Caco-2 (cell line): ENCODE measurements at regions of chr16 and their contacts with region 1.

Region 1: GRCh38 chr16:27235055-27235937 is 32.0 kb downstream of the KDM8 start:
- DNase-seq: peak in 1 of 2 experiments; percentile 50
- H3K4me3 ChIP-seq: no peak overlapping the region
- H3K4me3 Mint-ChIP-seq: no peak overlapping the region
- H3K27ac Mint-ChIP-seq: no peak overlapping the region
- H3K4me1 ChIP-seq: no peaks in the 10 kb centered on the region
- H3K4me1 Mint-ChIP-seq: peaks cover 9% of the 10 kb centered on the region
- H3K27me3 ChIP-seq: no peaks in the 10 kb centered on the region
- H3K27me3 Mint-ChIP-seq: no peaks in the 10 kb centered on the region
- CTCF ChIP-seq: peak; percentile 68 to 89

Region 2: GRCh38 chr16:27313422-27314160 is 78.3 kb after region 1 on chr16 and contains the start of gene IL4R:
- CTCF ChIA-PET with region 1: no interaction called
- POLR2A ChIA-PET with region 1: no interaction called
- intact Hi-C with region 1: loop called (anchors 10 kb)
- DNase-seq: peak; percentile 85 to 88
- H3K4me3 ChIP-seq: peak within 1 kb of the TSS; percentile 83
- H3K4me3 Mint-ChIP-seq: peak within 1 kb of the TSS; percentile 88
- H3K27ac Mint-ChIP-seq: peak within 1 kb of the TSS; percentile 90
- H3K4me1 ChIP-seq: peaks cover 32% of the 10 kb centered on the region
- H3K4me1 Mint-ChIP-seq: peaks cover 25% of the 10 kb centered on the region
- H3K27me3 ChIP-seq: no peaks in the 10 kb centered on the region
- H3K27me3 Mint-ChIP-seq: no peaks in the 10 kb centered on the region
- CTCF ChIP-seq: no peak
- total RNA-seq, gene IL4R: 32.6 and 34.4 TPM in 2 replicates

Region 3: DNA sequence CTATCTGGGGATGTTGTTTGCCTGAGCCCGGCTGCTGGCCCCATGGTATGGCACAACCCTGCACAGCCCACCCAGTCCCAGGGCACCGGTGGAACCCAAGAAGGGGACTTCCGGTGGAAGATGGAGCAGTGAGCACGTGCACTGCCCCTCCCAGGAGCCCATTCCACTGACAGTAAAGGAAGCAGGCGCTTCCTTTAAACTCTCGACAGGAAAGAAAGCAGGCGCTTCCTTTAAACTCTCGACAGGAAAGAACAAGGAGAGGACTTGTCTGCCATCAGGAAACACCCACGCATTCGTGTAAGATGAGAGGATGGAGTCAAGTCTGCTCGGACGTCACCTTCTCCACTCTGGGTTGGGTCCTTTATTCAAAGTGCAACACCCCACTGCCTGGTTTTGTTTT is 220.4 kb after region 1 on chr16:
- CTCF ChIA-PET with region 1: no interaction called
- POLR2A ChIA-PET with region 1: no interaction called
- intact Hi-C with region 1: loop called (anchors 2 kb)
- DNase-seq: no peak
- H3K4me3 ChIP-seq: no peak overlapping the region
- H3K4me3 Mint-ChIP-seq: no peak overlapping the region
- H3K27ac Mint-ChIP-seq: no peak overlapping the region
- H3K4me1 ChIP-seq: no peaks in the 10 kb centered on the region
- H3K4me1 Mint-ChIP-seq: no peaks in the 10 kb centered on the region
- H3K27me3 ChIP-seq: no peaks in the 10 kb centered on the region
- H3K27me3 Mint-ChIP-seq: no peaks in the 10 kb centered on the region
- CTCF ChIP-seq: no peak

Region 4: DNA sequence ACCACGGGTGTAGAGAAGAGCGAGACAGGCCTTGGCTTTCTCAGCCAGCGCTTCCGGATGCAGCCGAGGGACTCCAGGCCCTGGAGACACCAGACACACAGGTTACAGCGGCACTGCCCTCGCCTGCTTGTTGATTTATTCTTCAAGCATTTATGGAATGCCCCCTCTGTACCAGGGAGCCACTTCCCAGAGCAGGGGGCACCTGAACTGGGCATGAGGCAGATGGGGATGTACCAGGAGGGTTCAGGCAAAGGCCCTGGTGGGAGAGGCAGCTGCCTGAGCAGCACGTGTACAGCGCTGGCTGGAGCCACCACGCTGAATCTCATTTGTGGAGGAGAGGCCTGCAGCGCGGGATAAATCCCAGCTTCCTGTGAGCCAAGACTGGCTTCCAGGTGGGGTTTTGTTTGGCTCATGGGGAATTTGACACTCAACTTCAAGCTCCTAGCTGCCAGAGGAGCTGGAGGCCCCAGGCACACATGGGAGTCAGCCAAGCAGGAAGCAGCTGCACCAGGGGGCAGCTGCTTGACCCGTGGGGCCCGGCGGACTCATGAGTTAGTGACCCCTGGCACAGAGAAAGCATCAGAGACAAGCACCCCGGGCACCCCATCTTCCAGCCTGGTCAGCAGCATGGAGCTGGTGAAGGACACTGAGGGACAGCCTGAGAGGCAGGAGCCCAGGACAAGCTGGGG is 226.3 kb after region 1 on chr16:
- CTCF ChIA-PET with region 1: no interaction called
- POLR2A ChIA-PET with region 1: no interaction called
- intact Hi-C with region 1: loop called (anchors 2 kb)
- DNase-seq: no peak
- H3K4me3 ChIP-seq: no peak overlapping the region
- H3K4me3 Mint-ChIP-seq: no peak overlapping the region
- H3K27ac Mint-ChIP-seq: no peak overlapping the region
- H3K4me1 ChIP-seq: peaks cover 18% of the 10 kb centered on the region
- H3K4me1 Mint-ChIP-seq: no peaks in the 10 kb centered on the region
- H3K27me3 ChIP-seq: no peaks in the 10 kb centered on the region
- H3K27me3 Mint-ChIP-seq: no peaks in the 10 kb centered on the region
- CTCF ChIP-seq: no peak